A549 (cell line): ENCODE measurements at regions of chr7 and their contacts with region 1.

Region 1: GRCh38 chr7:132723506-132724081 is 147.3 kb upstream of the PLXNA4 start:
- DNase-seq: no peak
- ATAC-seq: no peak
- H3K4me3 ChIP-seq: no peak overlapping the region
- H3K27ac ChIP-seq: no peak overlapping the region
- H3K4me1 ChIP-seq: no peaks in the 10 kb centered on the region
- CTCF ChIP-seq: no peak
- EP300 ChIP-seq: no peak
- POLR2A ChIP-seq: no peak
- RAD21 ChIP-seq: no peak

Region 2: GRCh38 chr7:132630834-132631233 is 92.8 kb before region 1 on chr7:
- CTCF ChIA-PET with region 1: no interaction called
- POLR2A ChIA-PET with region 1: no interaction called
- DNase-seq: no peak
- ATAC-seq: no peak
- H3K4me3 ChIP-seq: no peak overlapping the region
- H3K27ac ChIP-seq: no peak overlapping the region
- H3K4me1 ChIP-seq: no peaks in the 10 kb centered on the region
- CTCF ChIP-seq: no peak
- EP300 ChIP-seq: no peak
- POLR2A ChIP-seq: no peak
- RAD21 ChIP-seq: no peak

Region 3: GRCh38 chr7:132643302-132643701 is 80.3 kb before region 1 on chr7:
- CTCF ChIA-PET with region 1: no interaction called
- POLR2A ChIA-PET with region 1: no interaction called
- DNase-seq: no peak
- ATAC-seq: no peak
- H3K4me3 ChIP-seq: no peak overlapping the region
- H3K27ac ChIP-seq: no peak overlapping the region
- H3K4me1 ChIP-seq: no peaks in the 10 kb centered on the region
- CTCF ChIP-seq: no peak
- EP300 ChIP-seq: no peak
- POLR2A ChIP-seq: no peak
- RAD21 ChIP-seq: no peak

Region 4: GRCh38 chr7:132709971-132710567 is 13.5 kb before region 1 on chr7:
- CTCF ChIA-PET with region 1: interaction called, 12 read pairs
- POLR2A ChIA-PET with region 1: interaction called, 4 read pairs
- DNase-seq: peak in 1 of 2 experiments; percentile 25
- ATAC-seq: peak in 1 of 2 experiments; percentile 71; a peak in 3 of 6 replicates
- H3K4me3 ChIP-seq: no peak overlapping the region
- H3K27ac ChIP-seq: no peak overlapping the region
- H3K4me1 ChIP-seq: no peaks in the 10 kb centered on the region
- CTCF ChIP-seq: peak; percentile 57
- EP300 ChIP-seq: no peak
- POLR2A ChIP-seq: no peak
- RAD21 ChIP-seq: peak; percentile 55 to 56

Region 5: DNA sequence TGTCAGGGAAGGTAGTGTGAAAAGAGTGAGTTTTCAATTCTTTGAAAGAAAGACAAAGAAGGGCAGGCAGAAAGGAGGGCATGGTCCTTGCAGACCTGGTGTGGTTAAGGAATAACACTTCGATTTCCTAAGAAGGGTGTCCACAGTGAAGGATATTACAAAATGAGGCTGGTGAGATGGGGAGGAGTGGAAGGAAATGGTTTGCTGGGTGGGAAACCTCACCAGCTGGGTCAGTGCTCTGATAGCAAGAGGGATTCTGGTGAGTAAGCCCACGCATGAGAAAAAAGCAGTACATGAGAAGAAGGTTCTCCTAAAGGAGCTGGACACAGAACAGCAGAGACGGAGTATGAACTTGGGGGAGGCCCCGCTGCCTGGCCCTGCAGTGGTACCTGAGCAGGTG is 83.2 kb after region 1 on chr7:
- CTCF ChIA-PET with region 1: no interaction called
- POLR2A ChIA-PET with region 1: no interaction called
- DNase-seq: no peak
- ATAC-seq: no peak
- H3K4me3 ChIP-seq: no peak overlapping the region
- H3K27ac ChIP-seq: no peak overlapping the region
- H3K4me1 ChIP-seq: no peaks in the 10 kb centered on the region
- CTCF ChIP-seq: no peak
- EP300 ChIP-seq: no peak
- POLR2A ChIP-seq: no peak
- RAD21 ChIP-seq: no peak

Region 6: GRCh38 chr7:132817949-132818348 is 94.4 kb after region 1 on chr7:
- CTCF ChIA-PET with region 1: no interaction called
- POLR2A ChIA-PET with region 1: no interaction called
- DNase-seq: no peak
- ATAC-seq: no peak
- H3K4me3 ChIP-seq: no peak overlapping the region
- H3K27ac ChIP-seq: no peak overlapping the region
- H3K4me1 ChIP-seq: no peaks in the 10 kb centered on the region
- CTCF ChIP-seq: no peak
- EP300 ChIP-seq: no peak
- POLR2A ChIP-seq: no peak
- RAD21 ChIP-seq: no peak